ENCODE measurements at regions of chr3 and their contacts with region 1.

Region 1: DNA sequence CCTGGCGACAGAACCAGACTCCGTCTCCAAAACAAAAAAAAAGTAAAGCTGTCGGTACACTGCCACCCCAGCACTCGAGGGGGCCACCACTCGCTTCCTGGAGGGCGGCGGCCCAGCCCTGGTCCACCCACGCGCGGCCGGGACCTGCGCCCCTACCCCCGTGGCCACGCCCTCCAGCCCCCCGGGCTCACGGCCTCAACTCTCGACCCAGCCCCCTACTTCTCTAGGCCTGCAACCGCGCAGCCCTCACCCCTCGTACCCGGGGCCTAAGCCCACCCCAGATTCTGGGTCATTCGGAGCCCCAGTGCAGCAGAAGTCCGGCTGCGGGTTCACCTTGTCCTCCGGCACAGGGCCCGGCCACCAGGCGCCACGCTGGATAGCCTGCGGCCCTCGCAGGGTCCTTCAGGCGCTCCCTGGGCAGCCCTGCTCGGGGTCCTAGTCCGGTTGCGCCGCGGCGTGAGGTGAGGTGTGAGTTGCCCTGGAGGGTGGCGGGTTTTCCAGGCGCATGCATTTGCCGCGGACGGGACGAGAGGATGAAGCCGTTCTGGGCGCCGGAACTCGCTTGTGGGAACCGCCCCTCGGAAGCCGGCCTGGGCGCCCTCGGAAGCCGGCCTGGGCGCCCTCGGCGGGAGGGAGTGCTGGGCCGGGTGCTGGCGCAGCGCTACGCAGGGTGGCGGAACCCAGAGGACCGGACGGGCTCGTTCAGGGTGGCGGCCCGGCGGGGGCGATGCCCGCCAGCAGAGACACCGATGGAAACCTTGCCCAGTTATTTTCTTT is 32.3 kb downstream of the SPINK8 start:
- DNase-seq: peak; percentile 75 to 94 (median 89)
- ATAC-seq: peak; percentile 82
- H3K4me3 ChIP-seq: peak within 1 kb of the TSS; percentile 87
- H3K4me3 Mint-ChIP-seq: peak within 1 kb of the TSS; percentile 93
- H3K27ac ChIP-seq: peak within 1 kb of the TSS; percentile 84
- H3K27ac Mint-ChIP-seq: peak within 1 kb of the TSS; percentile 86
- H3K4me1 ChIP-seq: peaks cover 21% of the 10 kb centered on the region
- H3K4me1 Mint-ChIP-seq: peaks cover 48% of the 10 kb centered on the region
- H3K27me3 ChIP-seq: no peaks in the 10 kb centered on the region
- H3K27me3 Mint-ChIP-seq: no peaks in the 10 kb centered on the region
- CTCF ChIP-seq: no peak

Region 2: GRCh38 chr3:48240711-48241491 is 60.3 kb before region 1 on chr3 and contains the start of gene ZNF589:
- CTCF ChIA-PET with region 1: no interaction called
- POLR2A ChIA-PET with region 1: interaction called, 19 read pairs
- intact Hi-C with region 1: loop called (anchors 2 to 5 kb)
- DNase-seq: peak; percentile 89 to 98 (median 94)
- ATAC-seq: peak; percentile 98
- H3K4me3 ChIP-seq: peak within 1 kb of the TSS; percentile 93
- H3K4me3 Mint-ChIP-seq: peak within 1 kb of the TSS; percentile 93
- H3K27ac ChIP-seq: peak within 1 kb of the TSS; percentile 85
- H3K27ac Mint-ChIP-seq: peak within 1 kb of the TSS; percentile 92
- H3K4me1 ChIP-seq: peaks cover 33% of the 10 kb centered on the region
- H3K4me1 Mint-ChIP-seq: peaks cover 23% of the 10 kb centered on the region
- H3K27me3 ChIP-seq: no peaks in the 10 kb centered on the region
- H3K27me3 Mint-ChIP-seq: no peaks in the 10 kb centered on the region
- CTCF ChIP-seq: no peak
- total RNA-seq, gene ZNF589: 18.3 to 20.5 TPM

Region 3: GRCh38 chr3:48268381-48269183 is 32.6 kb before region 1 on chr3:
- CTCF ChIA-PET with region 1: interaction called, 5 read pairs
- POLR2A ChIA-PET with region 1: interaction called, 31 read pairs
- intact Hi-C with region 1: loop called (anchors 2 kb)
- DNase-seq: peak; percentile 55 to 90 (median 76)
- ATAC-seq: peak; percentile 95
- H3K4me3 ChIP-seq: peak overlapping the region; percentile 28
- H3K4me3 Mint-ChIP-seq: peak overlapping the region; percentile 74
- H3K27ac ChIP-seq: peak overlapping the region; percentile 57 to 67
- H3K27ac Mint-ChIP-seq: peak overlapping the region; percentile 87
- H3K4me1 ChIP-seq: peaks cover 29% of the 10 kb centered on the region
- H3K4me1 Mint-ChIP-seq: peaks cover 38% of the 10 kb centered on the region
- H3K27me3 ChIP-seq: no peaks in the 10 kb centered on the region
- H3K27me3 Mint-ChIP-seq: no peaks in the 10 kb centered on the region
- CTCF ChIP-seq: no peak

Region 4: DNA sequence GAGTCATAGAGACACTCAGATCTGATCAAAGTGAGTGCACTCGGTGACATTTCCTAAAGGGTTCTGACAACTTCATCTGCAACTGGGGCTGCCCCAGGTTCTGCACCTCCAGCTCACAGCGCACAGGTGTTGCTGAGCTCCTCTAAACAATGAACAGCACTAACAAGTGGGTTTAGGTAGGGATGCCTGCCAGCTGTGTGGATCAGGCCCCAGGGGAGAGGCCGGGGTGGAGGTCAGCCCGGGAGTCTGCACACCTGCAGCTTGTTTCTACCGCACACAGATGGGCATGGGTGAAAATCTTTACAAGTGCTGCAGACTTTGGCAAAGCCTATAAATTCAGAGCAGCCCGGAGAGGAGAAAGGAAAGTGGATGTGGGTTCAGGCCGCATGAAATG is 71.2 kb after region 1 on chr3:
- CTCF ChIA-PET with region 1: no interaction called
- POLR2A ChIA-PET with region 1: no interaction called
- intact Hi-C with region 1: no loop called
- DNase-seq: no peak
- ATAC-seq: no peak
- H3K4me3 ChIP-seq: no peak overlapping the region
- H3K4me3 Mint-ChIP-seq: no peak overlapping the region
- H3K27ac ChIP-seq: no peak overlapping the region
- H3K27ac Mint-ChIP-seq: no peak overlapping the region
- H3K4me1 ChIP-seq: no peaks in the 10 kb centered on the region
- H3K4me1 Mint-ChIP-seq: no peaks in the 10 kb centered on the region
- H3K27me3 ChIP-seq: no peaks in the 10 kb centered on the region
- H3K27me3 Mint-ChIP-seq: no peaks in the 10 kb centered on the region
- CTCF ChIP-seq: no peak

Region 5: DNA sequence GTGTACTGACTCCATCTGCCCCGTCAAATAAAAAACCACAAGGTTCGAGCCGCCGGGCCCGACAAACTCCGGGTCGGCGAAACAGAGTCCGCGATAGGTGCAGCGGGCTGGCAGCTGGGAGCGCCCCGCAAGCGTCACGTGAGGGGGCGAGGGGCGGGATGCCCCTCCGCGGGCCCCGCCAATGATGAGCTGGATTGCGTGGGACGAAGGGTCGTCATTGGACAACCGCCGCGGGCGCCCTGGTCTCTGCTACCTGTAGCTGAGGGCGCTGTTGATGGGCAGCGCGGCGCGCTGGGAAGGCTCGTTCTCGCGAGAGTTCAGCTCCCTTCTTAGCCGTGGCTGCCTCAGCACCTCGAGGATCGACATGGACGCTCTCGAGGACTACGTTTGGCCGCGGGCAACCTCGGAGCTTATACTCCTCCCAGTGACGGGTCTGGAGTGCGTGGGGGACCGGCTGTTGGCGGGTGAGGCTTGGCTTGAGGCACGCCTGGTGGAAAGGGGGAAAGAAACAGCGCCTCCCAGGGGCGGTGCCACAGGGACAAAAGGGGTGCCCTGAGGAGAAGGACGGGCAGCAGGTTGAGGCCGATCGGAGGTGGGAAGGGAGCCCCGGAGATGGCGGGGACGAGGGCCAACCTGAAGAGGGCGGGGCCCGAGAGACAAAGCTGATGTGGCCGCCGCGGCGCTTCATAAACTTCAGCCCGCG is 706.0 kb after region 1 on chr3 and contains the start of gene WDR6:
- CTCF ChIA-PET with region 1: no interaction called
- POLR2A ChIA-PET with region 1: no interaction called
- intact Hi-C with region 1: loop called in 1 of 2 experiments (anchors 5 kb)
- DNase-seq: peak; percentile 93 to 99 (median 96)
- ATAC-seq: peak; percentile 86
- H3K4me3 ChIP-seq: peak within 1 kb of the TSS; percentile 99
- H3K4me3 Mint-ChIP-seq: peak within 1 kb of the TSS; percentile 99
- H3K27ac ChIP-seq: peak within 1 kb of the TSS; percentile 89 to 99
- H3K27ac Mint-ChIP-seq: peak within 1 kb of the TSS; percentile 97
- H3K4me1 ChIP-seq: peaks cover 25% of the 10 kb centered on the region
- H3K4me1 Mint-ChIP-seq: peaks cover 27% of the 10 kb centered on the region
- H3K27me3 ChIP-seq: no peaks in the 10 kb centered on the region
- H3K27me3 Mint-ChIP-seq: no peaks in the 10 kb centered on the region
- CTCF ChIP-seq: peak; percentile 19
- total RNA-seq, gene WDR6: 132 to 134 TPM